MCF 10A (cell line): ENCODE measurements at regions of chr9 and their contacts with region 1.

Region 1: GRCh38 chr9:21741151-21741550 is 61.3 kb upstream of the MTAP start:
- DNase-seq: no peak
- H3K4me3 Mint-ChIP-seq: no peak overlapping the region
- H3K27ac Mint-ChIP-seq: no peak overlapping the region
- H3K4me1 Mint-ChIP-seq: no peaks in the 10 kb centered on the region
- H3K27me3 Mint-ChIP-seq: no peaks in the 10 kb centered on the region
- CTCF ChIP-seq: no peak

Region 2: GRCh38 chr9:21681641-21682040 is 59.5 kb before region 1 on chr9:
- CTCF ChIA-PET with region 1: interaction called, 4 read pairs
- POLR2A ChIA-PET with region 1: interaction called, 21 read pairs
- intact Hi-C with region 1: no loop called
- DNase-seq: peak; percentile 31
- H3K4me3 Mint-ChIP-seq: no peak overlapping the region
- H3K27ac Mint-ChIP-seq: peak overlapping the region; percentile 85
- H3K4me1 Mint-ChIP-seq: peaks cover 13% of the 10 kb centered on the region
- H3K27me3 Mint-ChIP-seq: no peaks in the 10 kb centered on the region
- CTCF ChIP-seq: no peak